IMR-90 (cell line): ENCODE measurements at regions of chr6 and their contacts with region 1.

Region 1: GRCh38 chr6:53544470-53545308 is at the start of gene GCLC:
- DNase-seq: peak; percentile 95
- ATAC-seq: peak; percentile 70
- H3K4me3 ChIP-seq: peak within 1 kb of the TSS; percentile 97
- H3K27ac ChIP-seq: peak within 1 kb of the TSS; percentile 92
- H3K4me1 ChIP-seq: peaks cover 16% of the 10 kb centered on the region
- H3K27me3 ChIP-seq: no peaks in the 10 kb centered on the region
- CTCF ChIP-seq: peak; percentile 70
- POLR2A ChIP-seq: peak; percentile 94
- RAD21 ChIP-seq: peak; percentile 60
- total RNA-seq, gene GCLC: 20.8 and 24.2 TPM in 2 replicates

Region 2: DNA sequence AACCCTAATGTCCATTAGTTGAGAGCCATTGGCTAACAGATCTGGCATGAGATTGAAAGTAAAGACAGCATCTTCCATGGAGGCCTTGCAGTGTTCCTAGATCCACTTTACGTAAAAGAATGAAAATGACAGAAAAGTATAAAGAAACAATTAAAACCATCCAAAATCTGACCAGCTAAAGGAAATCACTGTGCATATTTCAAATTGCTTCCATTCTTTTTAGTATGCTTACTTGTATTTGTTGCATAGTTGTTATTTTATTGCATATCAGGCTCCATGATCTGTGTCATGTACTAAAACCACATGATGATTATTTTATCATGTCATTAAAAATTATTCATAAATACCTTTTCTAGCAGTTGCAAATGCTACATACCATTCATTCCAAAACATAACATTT is 67.7 kb before region 1 on chr6:
- CTCF ChIA-PET with region 1: no interaction called
- POLR2A ChIA-PET with region 1: no interaction called
- dilution Hi-C with region 1: no loop called
- in situ Hi-C with region 1: no loop called
- intact Hi-C with region 1: no loop called
- DNase-seq: no peak
- ATAC-seq: peak; percentile 46
- H3K4me3 ChIP-seq: no peak overlapping the region
- H3K27ac ChIP-seq: no peak overlapping the region
- H3K4me1 ChIP-seq: no peaks in the 10 kb centered on the region
- H3K27me3 ChIP-seq: peaks cover 4% of the 10 kb centered on the region
- CTCF ChIP-seq: no peak
- POLR2A ChIP-seq: no peak
- RAD21 ChIP-seq: no peak

Region 3: DNA sequence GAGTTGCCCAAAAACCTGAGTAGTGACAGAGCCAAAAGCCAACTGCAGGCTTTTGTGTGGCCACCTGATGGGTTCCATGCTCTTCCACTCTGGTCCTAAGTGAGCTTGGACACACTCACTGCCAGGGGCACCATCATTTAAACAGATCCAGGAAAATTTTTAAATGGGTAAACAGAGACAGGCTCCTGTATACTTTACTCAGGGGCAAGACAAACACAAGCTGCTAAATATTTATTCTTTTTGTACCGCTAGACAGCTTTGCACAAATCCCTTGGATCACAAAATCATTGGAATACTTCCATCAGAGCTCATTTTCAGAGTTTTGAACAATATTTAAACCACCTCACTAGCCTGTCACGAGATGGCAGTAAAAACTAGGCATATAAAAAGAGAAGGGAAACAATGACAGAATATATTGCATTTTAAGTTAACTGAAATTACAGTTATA is 31.1 kb before region 1 on chr6:
- CTCF ChIA-PET with region 1: interaction called, 4 read pairs
- POLR2A ChIA-PET with region 1: no interaction called
- dilution Hi-C with region 1: no loop called
- in situ Hi-C with region 1: no loop called
- intact Hi-C with region 1: loop called (anchors 5 kb)
- DNase-seq: no peak
- ATAC-seq: peak; percentile 75
- H3K4me3 ChIP-seq: no peak overlapping the region
- H3K27ac ChIP-seq: peak overlapping the region; percentile 74; the same call in 1 of the 2 replicates
- H3K4me1 ChIP-seq: peaks cover 4% of the 10 kb centered on the region; the same call in 1 of the 2 replicates
- H3K27me3 ChIP-seq: no peaks in the 10 kb centered on the region
- CTCF ChIP-seq: peak; percentile 49
- POLR2A ChIP-seq: no peak
- RAD21 ChIP-seq: peak; percentile 61

Region 4: GRCh38 chr6:53651764-53652401 is 107.2 kb after region 1 on chr6:
- CTCF ChIA-PET with region 1: interaction called, 8 read pairs
- POLR2A ChIA-PET with region 1: no interaction called
- dilution Hi-C with region 1: no loop called
- in situ Hi-C with region 1: loop called (anchors 5 kb)
- intact Hi-C with region 1: loop called (anchors 1 kb)
- DNase-seq: peak; percentile 44
- ATAC-seq: peak; percentile 89
- H3K4me3 ChIP-seq: peak overlapping the region; percentile 78
- H3K27ac ChIP-seq: no peak overlapping the region; the same call in 1 of the 2 replicates
- H3K4me1 ChIP-seq: peaks cover 1% of the 10 kb centered on the region; the same call in 1 of the 2 replicates
- H3K27me3 ChIP-seq: peaks cover 10% of the 10 kb centered on the region; the same call in 1 of the 2 replicates
- CTCF ChIP-seq: 0 out of 2 replicates have a peak, but pooled peaks have one; percentile 20
- POLR2A ChIP-seq: no peak
- RAD21 ChIP-seq: no peak

Region 5: DNA sequence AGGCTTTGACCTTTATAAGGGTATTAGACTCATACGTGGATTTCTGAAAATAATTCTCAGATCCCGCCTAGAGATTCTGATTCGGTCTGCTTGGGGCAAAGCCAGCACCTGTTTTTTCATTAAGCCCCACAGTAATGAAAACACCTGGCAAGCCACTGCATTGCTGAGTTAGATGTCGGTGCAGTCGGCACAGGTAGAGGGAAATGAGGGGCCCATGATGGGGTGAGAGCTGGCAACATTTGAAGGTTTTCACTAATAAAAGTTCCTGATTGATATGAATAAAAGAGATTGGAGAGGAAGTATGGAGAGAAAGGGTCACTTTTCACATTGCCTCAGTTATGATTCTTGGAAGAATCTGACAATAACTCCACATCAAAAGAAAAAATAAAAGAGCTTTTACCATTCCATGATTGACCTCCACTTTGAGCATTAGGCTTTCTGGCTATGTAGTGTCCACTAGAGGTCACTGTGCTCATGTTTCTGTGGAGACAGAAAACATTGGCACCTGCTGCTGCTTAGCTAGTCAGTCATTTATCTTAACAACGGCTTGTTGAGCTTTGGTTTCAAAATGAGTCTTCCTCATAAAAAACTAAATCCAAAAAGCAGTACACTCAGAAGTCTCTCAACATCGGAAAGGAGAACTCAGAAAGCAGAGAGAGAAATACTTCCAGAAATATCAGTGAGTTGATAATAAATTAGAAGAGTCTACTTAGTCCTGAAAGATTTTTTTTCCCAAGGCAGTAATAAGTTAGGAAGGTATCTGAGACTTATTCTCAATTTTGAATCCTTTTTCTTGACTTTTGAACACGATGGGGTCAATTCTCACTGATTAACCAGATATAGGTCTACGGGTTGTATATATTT is 174.1 kb after region 1 on chr6:
- CTCF ChIA-PET with region 1: no interaction called
- POLR2A ChIA-PET with region 1: no interaction called
- dilution Hi-C with region 1: no loop called
- in situ Hi-C with region 1: no loop called
- intact Hi-C with region 1: loop called (anchors 2 kb)
- DNase-seq: peak; percentile 75
- ATAC-seq: peak; percentile 44; the same call in 1 of the 2 replicates
- H3K4me3 ChIP-seq: no peak overlapping the region
- H3K27ac ChIP-seq: no peak overlapping the region
- H3K4me1 ChIP-seq: peaks cover 6% of the 10 kb centered on the region
- H3K27me3 ChIP-seq: no peaks in the 10 kb centered on the region; the same call in 1 of the 2 replicates
- CTCF ChIP-seq: peak; percentile 74
- POLR2A ChIP-seq: no peak
- RAD21 ChIP-seq: peak; percentile 51

Region 6: GRCh38 chr6:53725791-53726431 is 181.2 kb after region 1 on chr6:
- CTCF ChIA-PET with region 1: interaction called, 6 read pairs
- POLR2A ChIA-PET with region 1: no interaction called
- dilution Hi-C with region 1: no loop called
- in situ Hi-C with region 1: no loop called
- intact Hi-C with region 1: loop called (anchors 2 kb)
- DNase-seq: peak; percentile 69
- ATAC-seq: peak; percentile 94
- H3K4me3 ChIP-seq: no peak overlapping the region
- H3K27ac ChIP-seq: no peak overlapping the region
- H3K4me1 ChIP-seq: peaks cover 3% of the 10 kb centered on the region; the same call in 1 of the 2 replicates
- H3K27me3 ChIP-seq: no peaks in the 10 kb centered on the region
- CTCF ChIP-seq: peak; percentile 95
- POLR2A ChIP-seq: no peak
- RAD21 ChIP-seq: peak; percentile 89

Region 7: DNA sequence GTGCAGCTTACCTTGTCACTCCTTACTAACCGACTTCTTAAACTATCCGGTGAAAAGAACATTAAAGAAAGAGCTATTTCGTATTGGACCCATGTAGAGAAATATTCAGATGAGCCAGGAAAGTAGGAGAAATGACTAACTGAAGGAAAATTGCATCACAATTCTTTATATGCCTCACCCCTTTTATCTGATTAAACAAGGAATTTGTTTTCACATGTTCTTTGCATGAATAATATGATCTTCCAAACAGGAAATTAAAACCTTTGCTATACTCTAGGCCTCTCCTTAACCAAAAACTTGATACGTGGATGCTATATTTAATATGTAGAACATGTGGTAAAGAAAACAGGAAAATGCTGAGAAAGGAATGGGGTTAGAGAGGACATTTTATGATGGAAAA is 208.2 kb after region 1 on chr6:
- CTCF ChIA-PET with region 1: no interaction called
- POLR2A ChIA-PET with region 1: no interaction called
- dilution Hi-C with region 1: no loop called
- in situ Hi-C with region 1: no loop called
- intact Hi-C with region 1: no loop called
- DNase-seq: peak; percentile 72
- ATAC-seq: peak; percentile 90
- H3K4me3 ChIP-seq: no peak overlapping the region
- H3K27ac ChIP-seq: no peak overlapping the region; the same call in 1 of the 2 replicates
- H3K4me1 ChIP-seq: peaks cover 3% of the 10 kb centered on the region; the same call in 1 of the 2 replicates
- H3K27me3 ChIP-seq: no peaks in the 10 kb centered on the region
- CTCF ChIP-seq: no peak
- POLR2A ChIP-seq: no peak
- RAD21 ChIP-seq: no peak

Region 8: DNA sequence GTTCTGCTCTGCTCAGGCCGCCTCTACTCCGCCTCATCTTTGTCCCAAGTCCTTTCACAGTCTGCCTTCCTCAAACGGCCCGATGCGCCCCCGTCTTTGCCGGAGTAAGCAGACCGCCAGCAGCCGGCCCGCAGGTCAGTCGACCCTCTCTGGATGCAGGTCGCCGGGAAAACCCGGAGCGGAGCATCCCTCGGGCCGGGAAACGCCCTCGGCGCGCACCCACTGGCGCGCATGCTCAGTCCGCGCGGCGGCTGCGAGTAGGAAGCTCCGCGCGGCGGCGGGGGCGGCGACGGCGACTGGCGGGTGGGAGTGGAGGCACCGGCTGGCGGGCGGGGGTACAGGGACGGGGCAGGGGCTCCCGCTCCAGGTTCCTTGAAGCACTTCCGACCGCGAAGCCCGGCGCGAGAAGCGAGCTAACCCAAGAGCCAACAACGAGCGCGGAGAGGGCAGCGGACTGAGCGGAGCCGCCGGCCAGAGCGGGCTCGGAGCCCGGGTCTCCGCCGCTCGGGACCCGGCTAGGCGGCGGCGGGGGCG is 250.1 kb after region 1 on chr6 and contains the start of gene LRRC1:
- CTCF ChIA-PET with region 1: no interaction called
- POLR2A ChIA-PET with region 1: no interaction called
- dilution Hi-C with region 1: no loop called
- in situ Hi-C with region 1: loop called (anchors 10 kb)
- intact Hi-C with region 1: loop called (anchors 1 kb)
- DNase-seq: peak; percentile 88
- ATAC-seq: peak; percentile 87
- H3K4me3 ChIP-seq: peak within 1 kb of the TSS; percentile 82
- H3K27ac ChIP-seq: peak within 1 kb of the TSS; percentile 79
- H3K4me1 ChIP-seq: peaks cover 7% of the 10 kb centered on the region
- H3K27me3 ChIP-seq: no peaks in the 10 kb centered on the region
- CTCF ChIP-seq: no peak
- POLR2A ChIP-seq: peak; percentile 33; the same call in 1 of the 2 replicates
- RAD21 ChIP-seq: no peak
- total RNA-seq, gene LRRC1: 6.1 and 6.7 TPM in 2 replicates